HepG2 (cell line): ENCODE measurements at regions of chr18 and their contacts with region 1.

Region 1: GRCh38 chr18:34031814-34032213 is 192.9 kb downstream of the NOL4 start:
- DNase-seq: no peak
- ATAC-seq: peak; percentile 48; the same call in 1 of the 3 replicates
- H3K4me3 ChIP-seq: no peak overlapping the region
- H3K27ac ChIP-seq: no peak overlapping the region
- H3K4me1 ChIP-seq: no peaks in the 10 kb centered on the region
- H3K27me3 ChIP-seq: no peaks in the 10 kb centered on the region
- CTCF ChIP-seq: peak; percentile 29; the same call in 1 of the 2 replicates
- EP300 ChIP-seq: no peak
- POLR2A ChIP-seq: no peak
- RAD21 ChIP-seq: no peak

Region 2: DNA sequence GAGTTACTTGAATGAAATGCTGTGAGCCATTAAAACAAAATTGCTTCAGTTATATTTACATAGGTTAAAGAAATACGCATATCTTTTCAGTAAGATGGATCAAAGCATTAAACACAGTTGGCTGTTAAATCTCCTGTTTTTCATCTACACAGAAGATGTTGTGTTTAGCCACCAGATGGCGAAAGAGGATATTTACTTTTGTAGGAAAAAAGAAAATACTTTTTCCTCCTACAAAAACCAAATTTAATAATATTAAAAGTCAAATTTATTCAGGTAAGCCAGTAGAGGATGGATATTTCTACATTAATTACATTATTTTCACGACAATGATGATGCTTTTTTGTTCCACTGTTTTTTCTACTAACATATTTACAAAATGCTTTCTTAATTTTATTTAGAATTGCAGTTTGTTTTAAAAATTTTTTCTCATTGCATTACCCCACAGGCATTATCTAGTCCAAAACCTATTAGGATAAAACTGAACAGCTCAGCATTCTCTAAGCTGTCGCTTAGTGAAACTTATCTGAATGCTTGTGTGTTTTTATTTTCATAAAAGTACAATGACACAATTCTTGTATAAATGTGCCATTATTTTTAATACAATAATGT is 280.1 kb before region 1 on chr18:
- CTCF ChIA-PET with region 1: no interaction called
- POLR2A ChIA-PET with region 1: no interaction called
- in situ Hi-C with region 1: no loop called
- intact Hi-C with region 1: loop called (anchors 5 kb)
- DNase-seq: no peak
- ATAC-seq: no peak
- H3K4me3 ChIP-seq: no peak overlapping the region
- H3K27ac ChIP-seq: no peak overlapping the region
- H3K4me1 ChIP-seq: no peaks in the 10 kb centered on the region
- H3K27me3 ChIP-seq: no peaks in the 10 kb centered on the region
- CTCF ChIP-seq: peak; percentile 31
- EP300 ChIP-seq: no peak
- POLR2A ChIP-seq: no peak
- RAD21 ChIP-seq: no peak

Region 3: GRCh38 chr18:33839441-33840211 is 192.2 kb before region 1 on chr18:
- CTCF ChIA-PET with region 1: no interaction called
- POLR2A ChIA-PET with region 1: no interaction called
- in situ Hi-C with region 1: no loop called
- intact Hi-C with region 1: loop called (anchors 5 kb)
- DNase-seq: peak; percentile 55
- ATAC-seq: peak; percentile 44; the same call in 1 of the 3 replicates
- H3K4me3 ChIP-seq: no peak overlapping the region
- H3K27ac ChIP-seq: no peak overlapping the region
- H3K4me1 ChIP-seq: no peaks in the 10 kb centered on the region
- H3K27me3 ChIP-seq: no peaks in the 10 kb centered on the region
- CTCF ChIP-seq: peak; percentile 55
- EP300 ChIP-seq: no peak
- POLR2A ChIP-seq: no peak
- RAD21 ChIP-seq: no peak

Region 4: DNA sequence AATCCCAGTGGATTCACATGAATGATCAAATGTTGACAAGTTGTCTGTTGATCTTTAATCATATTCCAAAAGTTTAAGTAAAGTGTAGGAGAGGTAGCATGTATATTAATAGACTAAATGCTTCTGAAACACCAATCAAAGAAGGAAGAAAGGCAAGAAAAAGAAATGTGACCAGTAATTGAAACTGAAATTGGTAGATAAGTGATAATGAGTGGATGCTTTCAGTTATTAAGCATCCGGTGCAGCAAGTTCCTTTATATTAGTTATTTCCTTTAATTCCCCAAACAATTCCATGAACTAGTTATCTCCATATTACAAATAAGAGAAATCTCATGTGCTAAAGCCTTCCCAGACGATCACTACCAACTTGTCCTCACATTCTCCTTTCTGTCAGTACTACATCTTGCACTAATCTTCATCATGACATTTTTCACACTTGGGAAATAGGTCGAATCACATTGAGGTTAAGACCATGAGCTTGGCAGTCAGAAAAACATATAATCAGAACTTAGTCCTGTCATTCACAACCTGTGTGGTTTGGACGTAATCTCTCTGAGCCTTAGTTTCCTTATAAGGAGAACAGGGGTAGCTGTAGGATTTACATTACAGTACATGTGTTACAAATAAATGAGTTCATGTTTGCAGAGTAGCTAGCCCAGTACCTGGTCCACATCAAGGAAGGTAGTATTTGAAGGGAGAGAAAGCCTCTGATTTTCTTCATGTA is 10.8 kb after region 1 on chr18:
- CTCF ChIA-PET with region 1: no interaction called
- POLR2A ChIA-PET with region 1: no interaction called
- in situ Hi-C with region 1: no loop called
- intact Hi-C with region 1: no loop called
- DNase-seq: no peak
- ATAC-seq: no peak
- H3K4me3 ChIP-seq: no peak overlapping the region
- H3K27ac ChIP-seq: no peak overlapping the region
- H3K4me1 ChIP-seq: no peaks in the 10 kb centered on the region
- H3K27me3 ChIP-seq: no peaks in the 10 kb centered on the region
- CTCF ChIP-seq: no peak
- EP300 ChIP-seq: no peak
- POLR2A ChIP-seq: no peak
- RAD21 ChIP-seq: no peak